HAP-1 (cell line): ENCODE measurements at regions of chr17 and their contacts with region 1.

Region 1: DNA sequence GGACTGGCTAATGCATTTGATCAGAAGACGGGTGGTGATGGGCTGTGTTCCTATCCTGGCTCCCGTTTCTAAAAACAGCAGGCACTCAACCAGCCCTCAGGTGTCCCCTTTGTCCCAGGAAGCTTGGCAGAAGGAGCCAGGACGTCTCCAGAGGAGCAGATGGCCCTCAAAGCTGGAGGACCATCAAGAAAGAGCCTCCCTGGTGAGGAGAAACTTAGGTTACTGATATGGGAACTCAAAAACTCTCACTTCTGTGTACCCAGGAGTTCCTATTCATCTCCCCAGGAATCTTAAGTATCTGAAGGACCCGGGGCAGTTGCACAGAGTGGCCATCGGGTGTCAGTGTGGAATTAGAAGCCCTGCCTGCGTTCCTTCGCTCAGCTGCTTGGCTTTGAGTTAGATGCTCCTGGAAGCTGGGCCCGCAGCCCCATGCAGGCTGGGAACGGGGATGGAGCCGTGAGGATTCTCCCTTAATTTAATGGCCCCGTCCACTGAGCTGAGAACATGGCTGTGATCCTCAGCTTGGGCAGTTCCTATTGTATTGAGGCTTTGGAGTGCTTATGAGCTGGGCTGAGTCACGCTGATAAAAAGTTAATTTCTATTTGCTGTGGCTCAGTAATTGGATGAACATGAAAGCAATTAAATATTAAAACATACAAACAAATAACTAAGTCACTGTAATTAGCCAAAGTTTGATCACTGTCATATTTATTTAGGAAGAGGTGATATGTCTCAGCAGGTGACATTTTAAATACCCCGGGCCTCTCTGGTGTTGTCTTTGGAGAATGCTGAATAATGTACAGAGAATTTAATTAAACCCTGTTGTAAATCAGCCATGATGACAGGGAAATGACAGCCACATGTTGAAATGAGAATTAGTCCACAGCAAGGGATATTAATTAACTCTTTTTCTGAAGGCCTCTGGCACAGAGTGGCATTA is 402.1 kb downstream of the SEC14L1 start:
- DNase-seq: peak; percentile 83 to 84
- H3K4me3 ChIP-seq: no peak overlapping the region
- H3K4me1 ChIP-seq: peaks cover 11% of the 10 kb centered on the region
- H3K27me3 ChIP-seq: 0 out of 2 replicates have a peak, but pooled peaks cover 3% of the 10 kb centered on the region

Region 2: GRCh38 chr17:78013683-78014467 is 471.1 kb after region 1 on chr17:
- in situ Hi-C with region 1: loop called (anchors 10 kb)
- DNase-seq: peak; percentile 57 to 62
- H3K4me3 ChIP-seq: no peak overlapping the region
- H3K4me1 ChIP-seq: no peaks in the 10 kb centered on the region
- H3K27me3 ChIP-seq: no peaks in the 10 kb centered on the region